Right ventricle myocardium inferior (tissue), 1 donor: ENCODE measurements at regions of chr2 and their contacts with region 1.

Region 1: GRCh38 chr2:197113275-197113711 is 186.8 kb upstream of the PGAP1 start:
- DNase-seq: no peak
- ATAC-seq: no peak

Region 2: DNA sequence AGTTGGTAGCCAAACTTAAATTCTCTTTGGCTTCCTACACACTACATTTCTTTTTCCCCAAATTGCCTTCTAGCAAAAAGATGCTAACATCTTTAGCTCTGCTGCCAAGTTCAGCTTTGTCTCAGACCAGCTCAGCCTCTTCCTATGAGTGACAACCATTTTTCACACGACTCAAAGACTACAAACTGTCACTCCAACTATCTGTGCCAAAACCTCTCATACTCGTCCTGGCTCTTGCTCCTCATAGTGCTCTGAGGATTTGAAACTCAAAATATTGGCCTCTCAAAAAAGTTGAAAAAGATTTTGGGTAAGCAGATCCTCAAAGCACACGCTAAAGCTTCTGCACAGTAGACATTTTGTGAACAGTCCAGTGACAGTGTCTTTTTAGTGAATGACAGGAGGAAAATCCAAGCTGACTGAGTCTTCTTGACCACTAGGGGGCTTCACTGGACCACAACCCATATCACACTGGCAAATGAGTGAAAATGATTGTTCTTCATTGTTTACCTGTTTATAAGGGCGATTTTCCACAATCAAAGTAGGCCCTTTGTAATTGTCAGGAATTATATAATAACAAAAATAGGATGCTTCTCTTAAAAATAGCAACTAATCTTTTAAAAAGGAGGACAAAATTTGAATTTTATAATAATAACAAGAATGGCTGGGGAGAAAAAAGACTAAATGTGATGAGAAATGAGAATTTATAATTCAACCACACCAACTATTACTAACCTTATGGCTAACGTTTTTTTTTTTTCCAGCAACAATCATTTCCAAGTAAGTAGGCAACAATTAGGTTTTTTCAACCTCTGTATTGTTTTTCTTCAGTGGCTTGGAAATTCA is 101.3 kb before region 1 on chr2:
- intact Hi-C with region 1: loop called (anchors 1 kb)
- DNase-seq: no peak
- ATAC-seq: peak; percentile 65

Region 3: DNA sequence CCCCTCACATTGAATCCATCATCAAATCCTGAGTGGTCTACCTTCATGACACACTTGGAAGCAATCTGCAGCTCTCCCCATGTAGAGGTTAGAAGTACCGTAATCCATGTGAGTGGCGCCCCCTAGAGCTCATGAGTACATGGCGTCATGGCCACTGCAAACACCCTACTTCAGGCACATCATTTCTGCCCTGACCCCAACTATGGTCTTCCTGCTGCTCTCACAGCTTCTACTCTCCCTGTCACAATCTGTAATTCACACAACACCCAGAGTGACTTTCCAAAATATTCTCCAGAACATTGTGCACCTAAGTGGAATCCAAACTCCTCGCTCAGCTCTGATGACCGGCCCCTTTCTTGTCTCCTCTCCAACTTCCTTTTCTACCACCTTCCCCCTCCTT is 55.4 kb after region 1 on chr2:
- intact Hi-C with region 1: loop called (anchors 10 kb)
- DNase-seq: peak; percentile 73
- ATAC-seq: peak; percentile 52

Region 4: GRCh38 chr2:197191177-197191939 is 78.1 kb after region 1 on chr2:
- intact Hi-C with region 1: loop called (anchors 2 kb)
- DNase-seq: no peak
- ATAC-seq: no peak

Region 5: DNA sequence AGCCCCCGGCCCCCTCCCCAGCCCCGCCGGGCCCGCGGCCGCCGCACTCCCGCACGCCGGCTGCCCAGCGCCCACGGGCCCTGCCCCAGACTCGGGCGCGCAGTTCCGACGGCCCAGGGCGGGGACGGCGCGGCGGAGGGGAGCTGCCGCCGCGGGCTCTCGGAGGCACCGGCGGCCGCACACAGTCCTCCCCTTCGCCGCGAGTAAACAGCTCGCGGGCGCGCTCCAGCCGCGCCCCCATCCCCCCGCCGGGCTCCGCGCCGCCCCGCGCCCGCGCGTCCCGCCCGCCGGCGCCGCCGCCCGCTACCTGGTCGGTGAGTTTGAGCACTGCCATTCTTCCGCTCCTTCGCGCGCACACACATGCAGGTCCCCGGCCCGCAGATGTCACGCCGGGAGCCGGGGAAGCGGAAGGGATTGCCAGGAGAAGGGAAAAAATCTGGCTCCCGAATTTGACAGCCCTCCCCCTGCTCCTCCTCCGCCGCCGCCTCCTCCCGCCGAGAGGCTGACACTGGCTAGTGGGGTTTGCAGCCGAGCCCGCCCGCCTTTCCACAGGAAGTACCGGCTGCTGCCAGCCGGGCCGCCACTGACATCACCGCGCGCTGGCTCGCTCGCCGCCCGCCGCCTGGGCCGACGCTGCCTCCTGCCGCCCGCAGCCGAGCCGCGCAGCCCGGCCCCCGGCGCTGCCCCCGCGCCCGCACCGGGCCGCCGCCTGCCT is 197.1 kb after region 1 on chr2 and contains the start of gene ANKRD44:
- intact Hi-C with region 1: loop called (anchors 1 kb)
- DNase-seq: peak; percentile 97
- ATAC-seq: peak; percentile 98
- total RNA-seq, gene ANKRD44: 10.5 TPM

Region 6: GRCh38 chr2:197378494-197379307 is 265.4 kb after region 1 on chr2:
- intact Hi-C with region 1: loop called (anchors 1 kb)
- DNase-seq: no peak
- ATAC-seq: peak; percentile 48